ENCODE measurements at regions of chr2 and their contacts with region 1.

Region 1: DNA sequence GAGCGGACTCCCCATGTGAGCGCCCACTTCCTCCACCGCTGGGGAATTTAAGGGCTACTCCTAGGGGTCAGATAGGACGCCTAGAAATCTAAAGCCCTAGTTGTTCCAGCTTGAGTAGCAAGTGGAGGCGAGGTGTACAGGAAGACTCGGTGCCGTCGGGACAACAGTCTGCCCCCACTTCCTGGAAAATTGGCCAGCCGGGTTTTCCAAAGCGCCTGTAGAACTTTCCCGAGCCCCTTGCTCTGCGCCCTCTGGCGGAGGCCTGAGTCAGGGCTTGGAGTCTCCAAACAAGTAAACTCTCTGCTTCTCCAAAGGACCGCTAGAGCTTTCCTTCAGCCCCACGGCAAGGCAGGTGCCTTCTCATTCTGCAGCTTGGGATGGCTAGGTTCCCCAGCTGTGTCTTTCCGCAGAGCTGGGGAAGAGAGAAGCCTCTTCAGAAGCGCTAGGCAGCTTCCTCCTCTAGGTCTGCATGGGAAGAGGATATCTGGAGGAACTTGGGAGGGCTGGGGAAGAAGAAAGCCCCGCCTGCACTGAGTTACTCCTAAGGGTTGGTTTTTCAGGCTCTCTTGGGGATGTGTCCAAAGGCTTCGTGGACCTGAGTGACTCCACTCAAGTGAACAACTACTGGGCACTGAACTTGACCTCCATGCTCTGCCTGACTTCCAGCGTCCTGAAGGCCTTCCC is 688 bp downstream of the SPR start:
- DNase-seq: peak; percentile 85
- H3K4me3 Mint-ChIP-seq: peak overlapping the region; percentile 81
- H3K27ac Mint-ChIP-seq: no peak overlapping the region
- H3K4me1 Mint-ChIP-seq: peaks cover 4% of the 10 kb centered on the region
- H3K27me3 Mint-ChIP-seq: peaks cover 34% of the 10 kb centered on the region

Region 2: GRCh38 chr2:72770879-72771461 is 116.9 kb before region 1 on chr2:
- intact Hi-C with region 1: loop called (anchors 1 kb)
- DNase-seq: peak; percentile 91
- H3K4me3 Mint-ChIP-seq: no peak overlapping the region
- H3K27ac Mint-ChIP-seq: no peak overlapping the region
- H3K4me1 Mint-ChIP-seq: no peaks in the 10 kb centered on the region
- H3K27me3 Mint-ChIP-seq: no peaks in the 10 kb centered on the region

Region 3: GRCh38 chr2:72793798-72794440 is 94.0 kb before region 1 on chr2:
- intact Hi-C with region 1: no loop called
- DNase-seq: no peak
- H3K4me3 Mint-ChIP-seq: no peak overlapping the region
- H3K27ac Mint-ChIP-seq: no peak overlapping the region
- H3K4me1 Mint-ChIP-seq: peaks cover 6% of the 10 kb centered on the region
- H3K27me3 Mint-ChIP-seq: no peaks in the 10 kb centered on the region

Region 4: GRCh38 chr2:72973566-72974435 is 85.9 kb after region 1 on chr2:
- intact Hi-C with region 1: loop called (anchors 1 kb)
- DNase-seq: peak; percentile 83
- H3K4me3 Mint-ChIP-seq: no peak overlapping the region
- H3K27ac Mint-ChIP-seq: no peak overlapping the region
- H3K4me1 Mint-ChIP-seq: no peaks in the 10 kb centered on the region
- H3K27me3 Mint-ChIP-seq: peaks cover 11% of the 10 kb centered on the region

Region 5: GRCh38 chr2:73163483-73164367 is 275.8 kb after region 1 on chr2:
- intact Hi-C with region 1: loop called (anchors 5 kb)
- DNase-seq: peak; percentile 89
- H3K4me3 Mint-ChIP-seq: no peak overlapping the region
- H3K27ac Mint-ChIP-seq: no peak overlapping the region
- H3K4me1 Mint-ChIP-seq: peaks cover 1% of the 10 kb centered on the region
- H3K27me3 Mint-ChIP-seq: peaks cover 9% of the 10 kb centered on the region